ENCODE measurements at regions of chr9 and their contacts with region 1.

Region 1: GRCh38 chr9:128249908-128250838 is 25.6 kb downstream of the GOLGA2 start:
- DNase-seq: peak; percentile 99
- ATAC-seq: peak; percentile 98
- H3K4me3 Mint-ChIP-seq: peak overlapping the region; percentile 78
- H3K27ac Mint-ChIP-seq: peak overlapping the region; percentile 42
- H3K4me1 Mint-ChIP-seq: peaks cover 7% of the 10 kb centered on the region
- H3K27me3 Mint-ChIP-seq: peaks cover 10% of the 10 kb centered on the region

Region 2: DNA sequence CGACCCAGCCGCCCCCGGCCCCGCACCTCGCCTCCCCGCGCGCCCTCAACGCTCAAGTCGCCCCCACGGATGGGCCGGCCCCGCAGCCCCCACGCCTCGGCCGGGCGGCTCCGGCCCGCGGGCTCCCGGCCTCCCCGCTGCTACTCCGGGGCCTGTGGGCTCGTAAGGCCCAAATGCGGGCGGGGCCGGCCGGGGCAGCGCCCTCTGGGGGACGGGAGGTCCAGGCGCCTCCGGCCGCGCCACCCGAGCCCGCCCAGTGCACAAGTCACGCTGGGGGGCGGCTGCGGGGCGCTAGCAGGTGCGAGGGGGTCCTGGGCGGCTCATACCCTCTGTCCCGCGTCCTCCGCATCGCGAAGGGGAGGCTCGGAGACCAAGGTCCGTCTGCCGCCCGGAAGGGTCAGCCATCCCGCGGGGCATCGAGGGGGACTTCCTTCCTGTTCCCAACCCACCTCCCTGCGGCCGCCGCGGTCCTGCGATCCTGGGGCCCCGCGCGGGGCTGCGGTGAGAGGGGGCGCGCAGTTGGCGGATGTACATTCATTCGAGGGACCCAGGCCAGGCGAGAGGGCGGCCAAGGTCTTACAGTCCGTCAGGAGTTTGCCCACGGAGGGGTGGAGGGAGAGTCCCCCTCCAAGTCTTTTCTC is 58.6 kb before region 1 on chr9 and contains the start of gene CIZ1:
- CTCF ChIA-PET with region 1: no interaction called
- POLR2A ChIA-PET with region 1: no interaction called
- intact Hi-C with region 1: loop called in 1 of 2 experiments (anchors 1 kb)
- DNase-seq: peak; percentile 84
- ATAC-seq: peak; percentile 82
- H3K4me3 Mint-ChIP-seq: peak within 1 kb of the TSS; percentile 87
- H3K27ac Mint-ChIP-seq: peak within 1 kb of the TSS; percentile 85
- H3K4me1 Mint-ChIP-seq: peaks cover 28% of the 10 kb centered on the region
- H3K27me3 Mint-ChIP-seq: no peaks in the 10 kb centered on the region
- total RNA-seq, gene CIZ1: 79.5 to 110 TPM

Region 3: DNA sequence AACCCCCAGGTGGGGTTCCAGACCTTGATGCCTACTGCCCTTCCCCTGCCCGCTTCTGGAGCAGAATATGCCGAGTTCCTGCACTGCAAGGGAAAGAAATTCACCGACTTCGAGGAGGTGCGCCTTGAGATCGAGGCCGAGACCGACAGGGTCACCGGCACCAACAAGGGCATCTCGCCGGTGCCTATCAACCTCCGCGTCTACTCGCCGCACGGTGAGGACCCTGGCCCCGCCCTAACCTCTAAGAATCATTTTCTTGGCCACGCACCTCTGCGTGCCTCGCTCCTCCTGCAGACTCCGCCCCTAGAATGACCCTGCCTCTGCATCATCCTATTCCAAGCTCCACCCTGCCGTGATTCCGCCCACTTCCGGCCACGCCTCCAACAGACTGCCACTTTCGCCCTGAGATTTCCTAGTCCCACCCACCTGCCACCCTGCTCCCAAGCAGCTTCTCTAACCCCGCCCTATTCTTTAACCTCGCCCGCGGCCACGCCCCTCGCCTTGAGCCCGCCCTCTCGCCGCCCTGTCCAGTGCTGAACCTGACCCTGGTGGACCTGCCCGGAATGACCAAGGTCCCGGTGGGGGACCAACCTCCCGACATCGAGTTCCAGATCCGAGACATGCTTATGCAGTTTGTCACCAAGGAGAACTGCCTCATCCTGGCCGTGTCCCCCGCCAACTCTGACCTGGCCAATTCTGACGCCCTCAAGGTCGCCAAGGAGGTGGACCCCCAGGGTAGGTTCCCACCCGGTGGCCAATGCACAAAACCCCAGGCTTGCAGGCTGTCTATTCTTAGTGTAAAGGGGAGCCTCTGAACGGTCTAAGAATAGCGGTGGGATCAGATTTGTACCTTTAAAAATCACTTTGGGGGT is 31.4 kb before region 1 on chr9:
- CTCF ChIA-PET with region 1: interaction called, 5 read pairs
- POLR2A ChIA-PET with region 1: no interaction called
- intact Hi-C with region 1: loop called (anchors 1 kb)
- DNase-seq: peak; percentile 97
- ATAC-seq: peak; percentile 98
- H3K4me3 Mint-ChIP-seq: peak overlapping the region; percentile 71
- H3K27ac Mint-ChIP-seq: peak overlapping the region; percentile 74
- H3K4me1 Mint-ChIP-seq: peaks cover 11% of the 10 kb centered on the region
- H3K27me3 Mint-ChIP-seq: no peaks in the 10 kb centered on the region

Region 4: GRCh38 chr9:128786681-128787601 is 536.8 kb after region 1 on chr9 and contains the start of gene TBC1D13:
- CTCF ChIA-PET with region 1: no interaction called
- POLR2A ChIA-PET with region 1: no interaction called
- intact Hi-C with region 1: no loop called
- DNase-seq: peak; percentile 94
- ATAC-seq: peak; percentile 97
- H3K4me3 Mint-ChIP-seq: peak within 1 kb of the TSS; percentile 87
- H3K27ac Mint-ChIP-seq: peak within 1 kb of the TSS; percentile 87
- H3K4me1 Mint-ChIP-seq: peaks cover 18% of the 10 kb centered on the region
- H3K27me3 Mint-ChIP-seq: no peaks in the 10 kb centered on the region
- total RNA-seq, gene TBC1D13: 10.5 to 14.0 TPM

Region 5: GRCh38 chr9:129028192-129028957 is 778.2 kb after region 1 on chr9 and contains the start of gene SH3GLB2:
- CTCF ChIA-PET with region 1: no interaction called
- POLR2A ChIA-PET with region 1: no interaction called
- intact Hi-C with region 1: loop called in 1 of 2 experiments (anchors 1 kb)
- DNase-seq: peak; percentile 98
- ATAC-seq: peak; percentile 93
- H3K4me3 Mint-ChIP-seq: peak within 1 kb of the TSS; percentile 81
- H3K27ac Mint-ChIP-seq: peak within 1 kb of the TSS; percentile 52
- H3K4me1 Mint-ChIP-seq: peaks cover 17% of the 10 kb centered on the region
- H3K27me3 Mint-ChIP-seq: no peaks in the 10 kb centered on the region
- total RNA-seq, gene SH3GLB2: 49.1 to 53.7 TPM

Region 6: GRCh38 chr9:129080602-129081387 is 830.6 kb after region 1 on chr9 and contains the start of gene DOLPP1:
- CTCF ChIA-PET with region 1: no interaction called
- POLR2A ChIA-PET with region 1: no interaction called
- intact Hi-C with region 1: loop called in 1 of 2 experiments (anchors 1 kb)
- DNase-seq: peak; percentile 99
- ATAC-seq: peak; percentile 98
- H3K4me3 Mint-ChIP-seq: peak within 1 kb of the TSS; percentile 83
- H3K27ac Mint-ChIP-seq: peak within 1 kb of the TSS; percentile 63
- H3K4me1 Mint-ChIP-seq: peaks cover 20% of the 10 kb centered on the region
- H3K27me3 Mint-ChIP-seq: no peaks in the 10 kb centered on the region
- total RNA-seq, gene DOLPP1: 15.1 to 16.4 TPM